ENCODE measurements at regions of chr1 and their contacts with region 1.

Region 1: DNA sequence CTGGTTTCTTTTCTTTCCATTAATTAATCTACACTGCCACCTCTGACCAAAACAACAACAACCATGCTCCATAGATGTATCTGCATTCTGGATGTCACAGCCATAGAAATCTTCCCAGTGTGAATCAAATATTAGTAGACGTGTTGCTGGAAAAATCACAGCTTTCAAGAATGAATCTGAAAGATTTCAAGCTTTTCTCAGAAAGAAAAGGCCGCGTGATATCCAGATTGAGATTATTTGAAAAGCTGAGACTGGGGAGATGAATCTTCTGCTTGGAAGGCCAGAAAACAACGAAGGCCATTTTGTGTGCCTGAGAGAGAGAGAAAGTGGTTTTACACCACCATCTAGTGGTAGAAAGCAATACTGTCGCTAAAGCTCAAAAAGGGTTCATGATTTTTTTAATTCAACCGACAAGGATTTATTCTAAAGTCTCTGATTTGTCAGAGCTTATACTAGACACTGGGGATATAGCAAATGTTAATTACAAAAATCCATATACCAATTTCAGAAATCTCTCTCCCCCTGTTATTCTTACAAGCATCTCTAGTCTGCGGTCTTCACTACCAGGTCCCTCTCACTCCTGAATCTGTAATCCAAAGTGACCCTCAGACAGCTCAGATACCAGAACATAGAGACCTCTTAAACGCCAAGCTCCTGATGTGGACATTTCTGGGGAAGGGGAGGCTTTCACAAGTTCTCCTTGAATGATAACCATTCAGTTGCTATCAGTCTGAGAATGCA is 87.5 kb upstream of the SGIP1 start:
- DNase-seq: peak; percentile 64
- CTCF ChIP-seq: peak; percentile 72

Region 2: DNA sequence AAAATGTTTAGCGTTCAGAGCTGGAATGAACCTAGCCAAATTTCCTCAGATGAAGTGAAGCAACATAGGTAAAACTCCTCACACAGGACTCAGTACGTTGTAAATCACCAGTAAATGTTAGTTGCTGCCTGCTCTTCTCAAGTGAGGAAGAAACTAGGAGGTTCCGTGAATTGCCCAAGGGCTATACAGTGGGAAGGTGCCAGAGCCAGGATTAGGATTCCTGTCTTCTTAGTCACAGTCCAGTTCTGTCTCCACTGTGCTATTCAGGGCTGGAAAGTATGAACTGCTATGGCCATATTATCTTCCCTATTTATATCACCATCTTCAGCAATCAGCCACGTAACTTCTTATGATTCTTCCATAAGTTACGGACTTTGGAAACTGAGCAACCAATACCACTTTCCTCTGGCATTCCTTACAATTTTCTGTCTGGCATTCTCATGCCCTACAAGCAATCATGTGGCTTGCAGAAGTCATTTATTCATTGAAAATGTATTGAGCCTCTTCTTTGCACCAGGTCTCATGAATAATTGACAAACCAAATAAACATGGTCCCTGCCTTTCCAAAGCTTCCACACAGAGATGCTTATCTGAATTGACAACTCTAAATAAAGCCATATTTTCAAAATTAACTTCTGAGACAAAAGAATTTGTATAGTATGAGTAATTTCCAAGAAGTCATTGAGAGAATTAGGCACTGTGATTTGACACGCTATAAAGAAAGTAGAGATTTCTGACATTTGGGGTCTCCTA is 184.0 kb before region 1 on chr1:
- CTCF ChIA-PET with region 1: interaction called, 516 read pairs
- POLR2A ChIA-PET with region 1: no interaction called
- DNase-seq: no peak
- CTCF ChIP-seq: no peak

Region 3: DNA sequence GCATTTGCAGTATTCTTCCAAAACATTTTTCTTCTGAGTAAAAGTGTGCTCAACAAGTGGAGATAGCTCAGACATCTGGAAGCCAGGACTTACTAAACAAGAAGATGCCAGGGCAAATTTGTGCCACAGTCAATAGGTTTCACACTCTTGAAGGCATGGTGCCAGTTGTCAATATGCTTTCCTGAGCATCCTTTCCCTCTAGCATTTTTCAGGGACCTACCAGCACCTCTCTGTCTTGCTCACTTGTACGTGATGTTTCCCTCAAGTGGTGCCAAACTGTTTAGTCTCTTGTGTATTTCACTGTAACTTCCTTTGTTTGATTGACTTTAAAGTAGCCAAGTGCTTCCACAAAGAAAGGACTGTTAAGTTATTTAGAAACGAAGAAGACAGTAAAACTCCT is 106.5 kb before region 1 on chr1:
- CTCF ChIA-PET with region 1: interaction called, 30 read pairs
- POLR2A ChIA-PET with region 1: no interaction called
- DNase-seq: no peak
- CTCF ChIP-seq: no peak

Region 4: DNA sequence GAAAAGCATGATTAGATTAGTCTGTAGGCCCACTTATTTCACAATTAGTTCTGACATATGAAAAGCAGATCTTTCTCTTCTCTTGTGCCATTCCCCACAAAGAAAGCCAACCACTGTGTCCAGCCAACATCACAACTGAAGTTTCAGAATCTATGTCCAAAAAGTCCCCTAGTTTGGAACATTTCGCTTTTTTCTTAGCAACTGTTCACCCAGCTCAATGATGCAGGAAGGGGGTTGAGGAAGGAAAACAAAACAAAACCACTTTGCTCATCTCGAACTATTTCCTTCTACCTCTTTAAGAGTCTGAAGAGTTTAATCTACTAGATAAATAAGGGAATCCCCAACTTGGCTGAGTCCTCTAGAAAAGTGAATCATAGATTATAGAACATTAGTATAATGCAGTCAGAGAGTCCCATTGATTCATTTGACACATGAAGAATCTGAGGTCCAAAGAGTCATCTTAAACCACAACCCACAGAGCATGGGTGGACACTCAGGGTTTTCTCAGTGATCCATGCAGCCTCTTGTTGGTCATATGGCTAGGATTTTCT is 71.8 kb before region 1 on chr1:
- CTCF ChIA-PET with region 1: interaction called, 113 read pairs
- POLR2A ChIA-PET with region 1: no interaction called
- DNase-seq: peak; percentile 47
- CTCF ChIP-seq: no peak

Region 5: DNA sequence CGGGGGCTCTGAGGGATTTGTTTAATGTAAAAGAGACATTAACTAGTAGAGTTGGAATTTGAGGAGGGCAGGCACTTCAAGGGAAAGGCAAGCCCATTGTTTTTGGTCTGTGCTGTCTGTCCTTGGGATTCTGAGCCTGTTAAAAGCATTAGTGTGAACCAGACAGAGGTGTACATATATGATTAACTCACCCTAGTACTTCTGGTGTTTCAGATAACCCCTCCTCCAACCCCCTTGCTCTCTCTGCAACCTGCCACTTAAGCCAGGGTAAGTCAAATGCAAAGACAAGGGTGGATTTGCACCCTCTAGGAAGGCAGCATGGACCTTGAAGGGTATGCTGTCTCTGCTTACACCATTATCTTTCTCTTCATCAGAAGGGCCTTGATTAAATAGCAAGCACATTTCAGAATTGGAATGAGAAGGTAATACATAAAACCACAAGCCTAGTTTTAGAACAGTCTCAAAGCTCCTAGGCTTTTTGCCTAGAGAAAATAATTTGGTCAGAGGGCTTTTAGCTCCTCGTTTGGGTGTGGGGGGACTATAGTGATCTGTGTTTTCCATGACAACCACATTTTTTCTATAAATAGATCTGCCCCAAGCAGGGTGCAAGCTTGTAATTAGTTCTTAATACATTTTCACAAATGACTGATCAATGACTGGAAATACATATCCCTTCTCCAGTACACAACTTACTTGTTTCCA is 33.1 kb before region 1 on chr1:
- CTCF ChIA-PET with region 1: interaction called, 20 read pairs
- POLR2A ChIA-PET with region 1: no interaction called
- DNase-seq: no peak
- CTCF ChIP-seq: no peak